Heart right ventricle (tissue), 16 donors: ENCODE measurements at regions of chr17 and their contacts with region 1.

Region 1: GRCh38 chr17:59619293-59620063 is at the start of gene CLTC:
- DNase-seq: peak; percentile 90 to 93
- ATAC-seq: peak; percentile 93 to 96 (median 94)
- H3K4me3 ChIP-seq: peak within 1 kb of the TSS; percentile 74 to 94 (median 86)
- H3K27ac ChIP-seq: peak within 1 kb of the TSS; percentile 95 to 100 (median 98)
- H3K4me1 ChIP-seq: peaks cover 12 to 58% (median 45%) of the 10 kb centered on the region in 9 donors
- H3K27me3 ChIP-seq: no peaks in the 10 kb centered on the region
- CTCF ChIP-seq: peak in 1 of 9 donors; percentile 9
- total RNA-seq, gene CLTC: 138 to 196 (median 173) TPM

Region 2: GRCh38 chr17:59487161-59487873 is 132.2 kb before region 1 on chr17:
- intact Hi-C with region 1: no loop called
- DNase-seq: no peak
- ATAC-seq: peak in 1 of 8 donors; percentile 51
- H3K4me3 ChIP-seq: peak overlapping the region in 2 of 10 donors; percentile 8
- H3K27ac ChIP-seq: peak overlapping the region in 3 of 10 donors; percentile 6 to 23 (median 16)
- H3K4me1 ChIP-seq: peaks cover 0 to 19% (median 2%) of the 10 kb centered on the region in 9 donors
- H3K27me3 ChIP-seq: no peaks in the 10 kb centered on the region
- CTCF ChIP-seq: no peak

Region 3: GRCh38 chr17:59707114-59707970 is 87.9 kb after region 1 on chr17 and contains the starts of genes PTRH2 and VMP1:
- intact Hi-C with region 1: loop called in 1 of 10 experiments (anchors 5 kb)
- DNase-seq: peak; percentile 96 to 99
- ATAC-seq: peak; percentile 99 to 100 (median 99)
- H3K4me3 ChIP-seq: peak within 1 kb of the TSS; percentile 67 to 95 (median 72)
- H3K27ac ChIP-seq: peak within 1 kb of the TSS; percentile 64 to 92 (median 90)
- H3K4me1 ChIP-seq: peaks cover 11 to 54% (median 43%) of the 10 kb centered on the region in 9 donors
- H3K27me3 ChIP-seq: no peaks in the 10 kb centered on the region
- CTCF ChIP-seq: no peak
- total RNA-seq, gene PTRH2: 7.5 to 13.8 (median 9.1) TPM
- total RNA-seq, gene VMP1: 41.3 to 98.9 (median 51.6) TPM